PC-3 (cell line): ENCODE measurements at regions of chr11 and their contacts with region 1.

Region 1: DNA sequence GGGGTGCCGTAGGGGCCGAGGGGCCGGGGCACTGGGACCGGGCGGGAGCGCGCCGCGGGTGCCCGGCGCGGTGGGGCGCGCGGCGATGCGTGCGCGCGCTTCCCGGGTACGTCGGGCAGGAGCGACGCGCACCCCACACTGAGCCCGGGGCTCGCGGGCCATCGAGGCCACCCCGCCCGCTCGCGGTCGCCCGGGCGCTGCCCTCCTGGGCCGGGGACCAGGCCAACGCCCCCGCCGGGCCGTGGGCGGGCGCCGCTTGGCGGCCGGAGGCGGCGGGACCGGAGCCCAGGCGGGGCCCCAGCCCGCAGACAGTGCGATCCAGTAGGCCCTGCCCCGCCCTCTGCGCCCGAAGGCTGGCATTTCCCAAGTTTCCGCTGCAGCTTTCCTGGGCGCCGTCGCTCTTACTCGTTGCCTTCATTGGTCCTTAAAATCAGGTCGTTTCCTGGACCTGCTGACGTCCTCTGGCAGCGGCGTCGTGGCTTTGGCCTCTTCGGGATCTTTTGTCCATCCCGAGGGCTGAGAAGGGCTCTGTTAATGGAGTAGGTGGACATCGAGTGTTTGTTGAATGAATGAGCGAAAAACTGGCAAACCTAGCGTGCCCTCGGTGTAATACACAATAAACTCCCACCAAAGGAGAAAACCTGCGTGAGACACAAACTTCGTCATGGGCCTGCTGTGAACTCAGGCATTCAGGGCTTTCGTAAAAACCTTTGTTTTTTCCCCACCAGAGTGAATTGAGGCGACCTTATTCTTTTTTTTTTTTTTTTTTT is 638 bp downstream of the PARVA start:
- DNase-seq: peak; percentile 83
- ATAC-seq: peak; percentile 84
- H3K4me3 ChIP-seq: peak overlapping the region; percentile 84
- H3K27ac ChIP-seq: peak overlapping the region; percentile 77
- H3K4me1 ChIP-seq: peaks cover 14% of the 10 kb centered on the region; the same call in 1 of the 2 replicates
- H3K27me3 ChIP-seq: no peaks in the 10 kb centered on the region
- CTCF ChIP-seq: no peak

Region 2: GRCh38 chr11:12258451-12258850 is 119.6 kb before region 1 on chr11:
- CTCF ChIA-PET with region 1: no interaction called
- POLR2A ChIA-PET with region 1: no interaction called
- intact Hi-C with region 1: no loop called
- DNase-seq: peak; percentile 47
- ATAC-seq: peak; percentile 89
- H3K4me3 ChIP-seq: no peak overlapping the region
- H3K27ac ChIP-seq: no peak overlapping the region
- H3K4me1 ChIP-seq: peaks cover 15% of the 10 kb centered on the region
- H3K27me3 ChIP-seq: no peaks in the 10 kb centered on the region
- CTCF ChIP-seq: no peak

Region 3: DNA sequence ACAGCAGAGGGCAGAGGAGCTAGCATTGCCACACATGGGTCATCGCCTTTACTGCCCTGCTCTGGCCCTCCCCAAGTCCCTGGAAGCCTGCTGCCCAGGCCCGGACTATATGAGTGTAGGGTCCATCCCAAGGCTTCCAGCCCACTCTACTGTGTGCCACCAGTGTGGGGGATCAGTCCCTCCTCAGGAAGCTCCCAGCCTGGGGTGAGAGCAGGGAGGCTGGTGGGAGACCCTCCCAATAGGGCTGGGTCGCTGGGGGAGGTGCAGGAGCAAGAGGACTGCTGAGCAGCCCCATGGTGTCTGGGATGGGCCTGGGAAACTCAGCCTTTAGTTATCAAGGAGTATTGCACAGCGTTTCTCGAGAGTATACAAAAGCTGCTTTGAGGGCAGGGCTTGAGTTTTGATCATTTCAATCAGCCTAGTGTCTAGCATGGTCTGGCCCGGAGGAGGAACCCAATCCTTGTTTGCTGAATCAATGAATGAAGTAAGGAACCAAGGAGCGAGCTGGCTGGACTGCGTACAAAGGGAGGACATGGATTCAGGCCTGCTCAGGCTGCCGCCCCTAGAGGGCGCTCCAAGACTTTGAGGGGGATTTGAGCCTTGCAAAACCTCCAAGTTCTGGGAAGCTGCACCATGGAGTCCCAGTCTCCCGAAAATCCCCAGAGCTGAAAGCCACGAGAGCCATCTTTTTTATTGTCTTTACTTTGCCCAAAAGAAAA is 89.6 kb before region 1 on chr11:
- CTCF ChIA-PET with region 1: interaction called, 3 read pairs
- POLR2A ChIA-PET with region 1: no interaction called
- intact Hi-C with region 1: loop called (anchors 5 kb)
- DNase-seq: peak; percentile 94
- ATAC-seq: peak; percentile 23
- H3K4me3 ChIP-seq: peak overlapping the region; percentile 54
- H3K27ac ChIP-seq: peak overlapping the region; percentile 99
- H3K4me1 ChIP-seq: peaks cover 54% of the 10 kb centered on the region
- H3K27me3 ChIP-seq: no peaks in the 10 kb centered on the region
- CTCF ChIP-seq: peak; percentile 92

Region 4: DNA sequence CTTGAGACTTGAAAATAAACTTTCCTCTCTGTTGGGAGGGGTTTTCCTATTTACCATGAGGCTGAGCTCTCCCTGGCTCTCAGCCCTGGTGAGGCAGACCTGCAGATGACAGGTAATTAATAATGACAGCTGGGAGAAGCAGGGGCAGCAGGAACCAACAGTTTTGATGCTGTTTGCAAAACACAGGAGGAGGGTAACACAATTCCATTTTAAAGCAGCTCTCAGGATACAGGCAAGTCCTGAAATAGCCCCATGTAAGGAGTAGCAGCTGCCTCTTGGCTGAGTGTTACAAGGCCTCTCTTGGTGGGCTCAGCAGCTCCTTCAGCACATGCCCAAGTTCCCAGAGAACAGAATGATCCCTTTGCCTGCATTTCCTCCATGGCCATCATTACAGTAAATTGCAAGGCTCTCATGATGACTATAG is 12.7 kb after region 1 on chr11:
- CTCF ChIA-PET with region 1: no interaction called
- POLR2A ChIA-PET with region 1: no interaction called
- intact Hi-C with region 1: no loop called
- DNase-seq: no peak
- ATAC-seq: no peak
- H3K4me3 ChIP-seq: no peak overlapping the region
- H3K27ac ChIP-seq: no peak overlapping the region
- H3K4me1 ChIP-seq: no peaks in the 10 kb centered on the region
- H3K27me3 ChIP-seq: no peaks in the 10 kb centered on the region
- CTCF ChIP-seq: no peak